PC-9 (cell line): ENCODE measurements at regions of chr1 and their contacts with region 1.

Region 1: GRCh38 chr1:223700942-223701637 is 11.2 kb upstream of the CAPN2 start:
- DNase-seq: peak; percentile 91 to 97
- H3K4me3 ChIP-seq: peak overlapping the region; percentile 47; the same call in 1 of the 2 replicates
- H3K27ac ChIP-seq: peak overlapping the region; percentile 100
- H3K4me1 ChIP-seq: peaks cover 75% of the 10 kb centered on the region
- H3K27me3 ChIP-seq: no peaks in the 10 kb centered on the region
- CTCF ChIP-seq: no peak

Region 2: GRCh38 chr1:223726380-223727001 is 25.4 kb after region 1 on chr1:
- CTCF ChIA-PET with region 1: interaction called, 4 read pairs
- POLR2A ChIA-PET with region 1: interaction called, 7 read pairs
- intact Hi-C with region 1: loop called (anchors 2 kb)
- DNase-seq: peak; percentile 79 to 88
- H3K4me3 ChIP-seq: no peak overlapping the region
- H3K27ac ChIP-seq: peak overlapping the region; percentile 55
- H3K4me1 ChIP-seq: peaks cover 62% of the 10 kb centered on the region
- H3K27me3 ChIP-seq: no peaks in the 10 kb centered on the region
- CTCF ChIP-seq: no peak

Region 3: GRCh38 chr1:223748773-223749733 is 48.0 kb after region 1 on chr1:
- CTCF ChIA-PET with region 1: interaction called, 4 read pairs
- POLR2A ChIA-PET with region 1: interaction called, 6 read pairs
- intact Hi-C with region 1: loop called (anchors 2 kb)
- DNase-seq: peak in 1 of 2 experiments; percentile 32
- H3K4me3 ChIP-seq: no peak overlapping the region
- H3K27ac ChIP-seq: no peak overlapping the region
- H3K4me1 ChIP-seq: no peaks in the 10 kb centered on the region
- H3K27me3 ChIP-seq: no peaks in the 10 kb centered on the region
- CTCF ChIP-seq: peak; percentile 79

Region 4: DNA sequence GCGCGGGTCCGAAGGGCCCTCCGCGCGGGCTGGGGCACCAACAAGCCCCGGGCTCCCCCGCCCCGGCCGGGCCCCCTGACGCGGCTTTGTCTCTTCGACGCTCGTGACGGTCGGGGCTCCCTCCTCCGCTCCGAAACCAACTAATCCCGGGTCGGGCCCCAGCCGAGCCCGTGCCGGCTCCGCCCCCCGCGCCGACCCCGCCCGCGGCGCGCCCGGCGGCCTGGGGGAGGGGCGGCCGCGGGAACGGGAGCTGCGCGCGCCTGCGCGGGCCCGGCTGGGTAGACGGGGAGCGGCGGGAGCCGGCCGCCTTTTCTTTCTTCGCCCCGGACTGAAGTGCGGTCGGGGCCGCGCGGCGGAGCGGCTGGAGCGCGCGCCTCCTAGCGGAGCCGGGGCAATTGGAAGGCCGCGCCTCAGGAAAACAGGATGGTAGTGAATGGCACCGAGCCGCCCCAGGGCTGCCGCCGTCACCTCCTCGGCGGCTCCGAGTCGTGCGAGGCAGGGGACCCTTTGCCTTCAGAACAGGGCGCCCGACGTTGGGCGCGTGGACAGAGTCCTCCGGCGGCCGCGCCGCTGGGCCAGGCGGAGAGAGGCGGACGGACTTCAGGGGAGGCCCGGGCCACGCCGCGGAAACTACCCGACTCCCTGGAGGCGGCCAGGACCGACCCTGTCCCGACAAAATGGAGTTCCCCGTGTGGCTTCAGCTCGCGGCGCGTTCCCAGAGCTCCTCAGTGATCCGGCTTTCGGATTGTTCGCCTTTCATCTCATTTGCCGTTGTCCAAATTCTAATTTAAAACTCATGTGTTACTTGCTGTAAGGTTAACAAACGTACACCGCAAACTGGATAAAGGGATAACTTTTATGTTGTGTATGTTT is 145.0 kb after region 1 on chr1 and contains the start of gene TP53BP2:
- CTCF ChIA-PET with region 1: no interaction called
- POLR2A ChIA-PET with region 1: no interaction called
- intact Hi-C with region 1: loop called (anchors 1 kb)
- DNase-seq: peak; percentile 70 to 97
- H3K4me3 ChIP-seq: peak within 1 kb of the TSS; percentile 72
- H3K27ac ChIP-seq: peak within 1 kb of the TSS; percentile 95
- H3K4me1 ChIP-seq: peaks cover 44% of the 10 kb centered on the region
- H3K27me3 ChIP-seq: no peaks in the 10 kb centered on the region
- CTCF ChIP-seq: peak; percentile 66
- total RNA-seq, gene TP53BP2: 63.1 and 81.4 TPM in 2 replicates

Region 5: DNA sequence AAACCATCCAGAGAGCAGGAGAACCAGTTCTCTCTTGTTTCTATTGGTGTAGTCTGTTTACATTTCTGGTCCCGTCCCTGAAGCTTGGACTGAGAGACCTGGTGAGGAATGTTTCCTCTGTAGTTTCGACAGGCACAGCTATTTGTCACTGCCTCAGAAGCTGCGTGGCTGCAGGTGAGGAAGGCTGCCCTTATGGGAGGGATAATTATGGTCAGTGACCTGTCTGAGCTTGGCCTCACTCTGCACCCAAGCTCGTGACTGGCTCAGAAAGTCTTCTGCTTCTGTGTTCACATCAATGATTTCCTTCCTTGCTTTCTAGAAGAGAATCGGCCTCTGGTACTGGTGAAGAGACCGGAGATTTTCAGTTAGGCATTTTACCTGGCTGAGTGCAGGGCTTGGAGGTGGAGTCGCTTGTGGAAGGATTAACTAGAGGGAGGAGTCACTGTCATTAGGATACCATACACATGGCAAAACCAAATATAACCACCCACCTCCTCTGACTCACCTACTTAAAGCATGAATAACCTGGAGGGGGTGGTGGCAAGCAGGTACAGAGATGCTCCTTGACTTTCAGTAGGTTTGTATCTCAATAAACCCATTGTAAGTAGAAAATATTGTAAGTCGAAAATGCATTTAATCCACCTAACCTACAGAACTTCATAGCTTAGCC is 753.4 kb after region 1 on chr1:
- CTCF ChIA-PET with region 1: interaction called, 3 read pairs
- POLR2A ChIA-PET with region 1: no interaction called
- intact Hi-C with region 1: loop called (anchors 2 kb)
- DNase-seq: peak; percentile 81 to 98
- H3K4me3 ChIP-seq: peak overlapping the region; percentile 39; the same call in 1 of the 2 replicates
- H3K27ac ChIP-seq: peak overlapping the region; percentile 88
- H3K4me1 ChIP-seq: peaks cover 45% of the 10 kb centered on the region
- H3K27me3 ChIP-seq: no peaks in the 10 kb centered on the region
- CTCF ChIP-seq: no peak